ENCODE measurements at regions of chr10 and their contacts with region 1.

Region 1: GRCh38 chr10:118028619-118029018 is 18.1 kb downstream of the RAB11FIP2 start:
- DNase-seq: peak; percentile 33
- ATAC-seq: peak; percentile 97
- H3K4me3 ChIP-seq: 0 out of 2 replicates have a peak overlapping the region, but pooled peaks have one; percentile 10
- H3K27ac ChIP-seq: no peak overlapping the region
- H3K4me1 ChIP-seq: peaks cover 10% of the 10 kb centered on the region; the same call in 1 of the 2 replicates
- H3K27me3 ChIP-seq: no peaks in the 10 kb centered on the region
- CTCF ChIP-seq: no peak
- EP300 ChIP-seq: peak; percentile 40 to 68; a peak in 3 of 4 replicates
- POLR2A ChIP-seq: no peak
- RAD21 ChIP-seq: no peak

Region 2: DNA sequence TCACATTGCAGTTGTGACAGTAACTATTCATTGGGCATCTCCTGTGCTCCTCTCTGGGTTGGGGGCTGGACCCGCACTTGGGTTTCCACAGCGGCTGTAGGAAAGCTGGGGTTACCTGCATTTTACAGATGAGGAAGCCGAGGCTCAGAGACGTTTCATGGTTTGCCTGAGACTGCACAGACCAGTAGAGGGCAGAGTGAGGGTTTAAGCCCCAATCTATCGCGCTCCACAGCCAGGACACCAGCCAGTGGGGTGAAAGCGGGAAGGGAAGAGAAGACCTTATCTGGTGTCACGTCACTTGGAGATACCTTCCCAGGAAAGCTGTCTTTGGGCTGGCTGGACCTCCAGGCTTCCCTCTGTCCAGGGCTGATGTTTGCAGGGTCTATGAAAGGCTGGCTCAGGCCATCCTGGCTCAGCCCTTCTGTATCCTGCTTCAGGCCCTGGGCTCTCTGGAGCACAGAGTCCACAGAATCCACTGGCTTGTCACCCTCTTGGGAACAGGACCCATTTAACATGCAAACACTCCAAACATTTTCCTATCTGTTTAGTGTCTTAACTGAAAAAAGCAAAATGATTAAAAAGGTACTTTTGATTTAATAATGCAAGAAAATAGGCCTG is 318.3 kb before region 1 on chr10:
- CTCF ChIA-PET with region 1: no interaction called
- POLR2A ChIA-PET with region 1: no interaction called
- RAD21 ChIA-PET with region 1: no interaction called
- SMC1A ChIA-PET with region 1: no interaction called
- in situ Hi-C with region 1: no loop called
- intact Hi-C with region 1: no loop called
- DNase-seq: no peak
- ATAC-seq: no peak
- H3K4me3 ChIP-seq: no peak overlapping the region
- H3K27ac ChIP-seq: no peak overlapping the region
- H3K4me1 ChIP-seq: no peaks in the 10 kb centered on the region
- H3K27me3 ChIP-seq: no peaks in the 10 kb centered on the region
- CTCF ChIP-seq: 0 out of 6 replicates have a peak, but pooled peaks of 1 of the 3 experiments have one; percentile 7
- EP300 ChIP-seq: no peak
- POLR2A ChIP-seq: no peak
- RAD21 ChIP-seq: no peak

Region 3: DNA sequence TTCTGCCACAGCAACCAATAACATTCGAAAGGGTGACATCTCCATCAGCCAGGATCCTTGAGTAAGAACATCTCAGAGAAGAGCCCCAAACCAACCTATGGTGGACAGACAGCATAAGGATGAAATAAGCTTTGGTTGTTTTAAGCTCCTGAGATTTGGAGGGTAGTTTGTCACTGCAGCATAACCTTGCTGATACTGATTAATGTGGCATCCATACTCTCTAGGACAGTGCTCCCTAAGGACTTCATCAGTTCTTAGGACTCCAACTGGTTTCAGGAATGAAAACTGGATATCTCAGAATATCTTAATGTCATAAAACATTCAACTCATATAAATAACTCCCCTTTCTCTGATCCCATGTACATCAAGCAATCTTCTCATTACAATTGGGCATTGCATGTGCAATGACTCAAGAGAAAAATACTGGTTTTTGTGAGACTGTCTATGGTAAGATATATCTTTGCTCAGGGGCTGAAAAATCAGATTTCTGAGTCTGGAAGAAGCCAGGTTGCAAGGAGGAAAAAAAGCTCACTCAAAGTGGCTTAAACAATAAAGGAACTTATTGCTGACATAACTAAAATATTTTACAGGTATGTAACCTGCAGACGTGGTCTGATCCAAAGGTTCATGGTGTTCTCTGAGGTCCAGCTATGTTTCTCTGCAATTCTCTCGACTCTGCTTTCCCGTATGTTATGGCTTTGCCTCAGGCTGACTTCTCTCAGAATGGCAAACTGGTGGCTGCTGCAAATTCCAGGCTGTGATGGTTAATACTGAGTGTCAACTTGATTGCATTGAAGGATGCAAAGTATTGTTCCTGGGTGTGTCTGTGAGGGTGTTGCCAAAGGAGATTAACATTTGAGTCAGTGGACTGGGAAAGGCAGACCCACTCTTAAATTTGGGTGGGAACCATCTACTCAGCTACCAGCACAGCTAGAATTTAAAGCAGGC is 47.6 kb before region 1 on chr10:
- CTCF ChIA-PET with region 1: no interaction called
- POLR2A ChIA-PET with region 1: no interaction called
- RAD21 ChIA-PET with region 1: no interaction called
- SMC1A ChIA-PET with region 1: no interaction called
- in situ Hi-C with region 1: no loop called
- intact Hi-C with region 1: no loop called
- DNase-seq: no peak
- ATAC-seq: no peak
- H3K4me3 ChIP-seq: no peak overlapping the region
- H3K27ac ChIP-seq: no peak overlapping the region
- H3K4me1 ChIP-seq: no peaks in the 10 kb centered on the region
- H3K27me3 ChIP-seq: no peaks in the 10 kb centered on the region
- CTCF ChIP-seq: no peak
- EP300 ChIP-seq: no peak
- POLR2A ChIP-seq: no peak
- RAD21 ChIP-seq: no peak

Region 4: DNA sequence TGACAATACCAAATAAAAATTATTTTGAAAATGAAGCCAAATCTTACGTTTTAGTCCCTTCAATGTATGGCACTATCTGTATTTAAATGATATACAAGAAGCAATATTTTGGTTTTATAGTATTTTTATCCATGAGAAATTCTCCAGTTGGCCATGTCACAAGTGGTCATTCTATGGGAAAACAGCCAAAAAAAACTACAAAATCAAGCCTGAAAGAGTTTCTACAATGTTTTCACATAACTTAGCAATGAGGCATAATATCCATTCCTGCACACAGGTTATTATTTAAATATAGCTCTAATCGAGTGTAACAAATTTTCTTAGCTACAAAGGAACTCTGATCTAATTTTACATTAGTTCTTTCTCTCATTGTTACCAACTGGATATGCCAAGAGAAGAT is 12.7 kb after region 1 on chr10:
- CTCF ChIA-PET with region 1: interaction called, 4 read pairs
- POLR2A ChIA-PET with region 1: no interaction called
- RAD21 ChIA-PET with region 1: interaction called, 9 read pairs
- SMC1A ChIA-PET with region 1: interaction called, 31 read pairs
- in situ Hi-C with region 1: no loop called
- intact Hi-C with region 1: no loop called
- DNase-seq: no peak
- ATAC-seq: no peak
- H3K4me3 ChIP-seq: no peak overlapping the region
- H3K27ac ChIP-seq: no peak overlapping the region
- H3K4me1 ChIP-seq: no peaks in the 10 kb centered on the region; the same call in 1 of the 2 replicates
- H3K27me3 ChIP-seq: no peaks in the 10 kb centered on the region
- CTCF ChIP-seq: no peak
- EP300 ChIP-seq: no peak
- POLR2A ChIP-seq: no peak
- RAD21 ChIP-seq: no peak

Region 5: GRCh38 chr10:118139321-118139720 is 110.7 kb after region 1 on chr10:
- CTCF ChIA-PET with region 1: no interaction called
- POLR2A ChIA-PET with region 1: no interaction called
- RAD21 ChIA-PET with region 1: no interaction called
- SMC1A ChIA-PET with region 1: no interaction called
- in situ Hi-C with region 1: no loop called
- intact Hi-C with region 1: no loop called
- DNase-seq: no peak
- ATAC-seq: no peak
- H3K4me3 ChIP-seq: no peak overlapping the region
- H3K27ac ChIP-seq: no peak overlapping the region
- H3K4me1 ChIP-seq: no peaks in the 10 kb centered on the region
- H3K27me3 ChIP-seq: no peaks in the 10 kb centered on the region
- CTCF ChIP-seq: no peak
- EP300 ChIP-seq: no peak
- POLR2A ChIP-seq: no peak
- RAD21 ChIP-seq: no peak

Region 6: GRCh38 chr10:118373786-118374185 is 345.2 kb after region 1 on chr10:
- CTCF ChIA-PET with region 1: no interaction called
- POLR2A ChIA-PET with region 1: no interaction called
- RAD21 ChIA-PET with region 1: no interaction called
- SMC1A ChIA-PET with region 1: no interaction called
- in situ Hi-C with region 1: no loop called
- intact Hi-C with region 1: no loop called
- DNase-seq: no peak
- ATAC-seq: no peak
- H3K4me3 ChIP-seq: no peak overlapping the region
- H3K27ac ChIP-seq: no peak overlapping the region
- H3K4me1 ChIP-seq: no peaks in the 10 kb centered on the region
- H3K27me3 ChIP-seq: no peaks in the 10 kb centered on the region; a peak in 1 of 4 replicates
- CTCF ChIP-seq: no peak
- EP300 ChIP-seq: no peak
- POLR2A ChIP-seq: no peak
- RAD21 ChIP-seq: no peak

Measured in GM12878 (cell line).